ENCODE measurements at regions of chr1 and their contacts with region 1.

Region 1: GRCh38 chr1:208652296-208653160 is 408.3 kb upstream of the PLXNA2 start:
- DNase-seq: peak; percentile 83
- H3K4me3 Mint-ChIP-seq: no peak overlapping the region
- H3K27ac Mint-ChIP-seq: no peak overlapping the region
- H3K4me1 Mint-ChIP-seq: peaks cover 13% of the 10 kb centered on the region
- H3K27me3 Mint-ChIP-seq: peaks cover 21% of the 10 kb centered on the region
- CTCF ChIP-seq: peak; percentile 98

Region 2: GRCh38 chr1:208251911-208252835 is 400.4 kb before region 1 on chr1:
- CTCF ChIA-PET with region 1: no interaction called
- POLR2A ChIA-PET with region 1: no interaction called
- intact Hi-C with region 1: no loop called
- DNase-seq: no peak
- H3K4me3 Mint-ChIP-seq: no peak overlapping the region
- H3K27ac Mint-ChIP-seq: no peak overlapping the region
- H3K4me1 Mint-ChIP-seq: peaks cover 11% of the 10 kb centered on the region
- H3K27me3 Mint-ChIP-seq: peaks cover 24% of the 10 kb centered on the region
- CTCF ChIP-seq: no peak

Region 3: GRCh38 chr1:208641579-208642280 is 10.8 kb before region 1 on chr1:
- CTCF ChIA-PET with region 1: interaction called, 50 read pairs
- POLR2A ChIA-PET with region 1: no interaction called
- intact Hi-C with region 1: no loop called
- DNase-seq: no peak
- H3K4me3 Mint-ChIP-seq: no peak overlapping the region
- H3K27ac Mint-ChIP-seq: no peak overlapping the region
- H3K4me1 Mint-ChIP-seq: no peaks in the 10 kb centered on the region
- H3K27me3 Mint-ChIP-seq: peaks cover 27% of the 10 kb centered on the region
- CTCF ChIP-seq: no peak

Region 4: GRCh38 chr1:208793861-208794345 is 141.4 kb after region 1 on chr1:
- CTCF ChIA-PET with region 1: no interaction called
- POLR2A ChIA-PET with region 1: no interaction called
- intact Hi-C with region 1: no loop called
- DNase-seq: no peak
- H3K4me3 Mint-ChIP-seq: no peak overlapping the region
- H3K27ac Mint-ChIP-seq: no peak overlapping the region
- H3K4me1 Mint-ChIP-seq: peaks cover under 1% of the 10 kb centered on the region
- H3K27me3 Mint-ChIP-seq: no peaks in the 10 kb centered on the region
- CTCF ChIP-seq: no peak

Region 5: DNA sequence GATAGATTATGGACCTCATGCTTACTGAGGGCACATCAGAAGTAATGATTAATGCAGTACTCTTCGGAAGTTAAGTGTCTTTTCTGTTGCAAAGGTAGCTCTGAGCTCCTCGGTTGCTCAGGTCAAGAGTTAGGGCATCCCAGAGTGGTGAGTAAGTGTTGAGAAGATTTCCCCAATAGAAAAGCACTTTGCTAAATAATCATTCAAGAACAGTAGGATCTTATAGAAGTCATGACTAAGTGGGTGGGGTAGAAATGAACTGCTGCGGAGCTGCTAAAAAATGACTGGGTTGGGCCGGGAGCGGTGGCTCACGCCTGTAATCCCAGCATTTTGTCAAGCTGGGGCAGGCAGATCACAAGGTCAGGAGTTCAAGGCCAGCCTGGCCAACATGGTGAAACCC is 282.4 kb after region 1 on chr1:
- CTCF ChIA-PET with region 1: interaction called, 9 read pairs
- POLR2A ChIA-PET with region 1: no interaction called
- intact Hi-C with region 1: loop called (anchors 5 kb)
- DNase-seq: peak; percentile 27
- H3K4me3 Mint-ChIP-seq: no peak overlapping the region
- H3K27ac Mint-ChIP-seq: peak overlapping the region; percentile 58
- H3K4me1 Mint-ChIP-seq: peaks cover 7% of the 10 kb centered on the region
- H3K27me3 Mint-ChIP-seq: no peaks in the 10 kb centered on the region
- CTCF ChIP-seq: no peak

Region 6: DNA sequence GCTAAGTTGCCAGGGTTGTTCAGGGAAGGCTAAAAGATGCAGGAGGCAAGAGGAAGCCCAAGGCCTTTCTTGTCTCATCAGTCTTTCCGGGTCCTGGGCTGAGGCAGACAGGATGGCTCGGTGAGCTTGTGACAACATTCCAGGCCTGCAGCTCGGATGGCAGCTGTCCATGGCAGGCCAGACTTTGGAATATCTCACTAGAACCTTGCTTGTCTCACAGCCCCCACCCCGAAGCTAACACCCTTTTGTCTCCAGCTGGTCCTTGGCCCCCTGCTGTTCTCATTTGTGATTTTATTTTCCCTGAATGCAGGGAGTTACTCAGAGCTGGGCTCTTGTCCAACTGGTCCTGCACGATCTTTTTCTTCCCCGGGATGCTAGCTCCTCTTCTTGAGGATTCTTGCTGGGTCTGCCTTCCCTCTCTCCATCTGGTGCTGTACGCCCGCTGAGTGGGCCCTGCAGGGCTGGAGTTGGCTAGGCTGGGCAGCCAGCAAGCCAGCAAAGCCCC is 453.8 kb after region 1 on chr1:
- CTCF ChIA-PET with region 1: interaction called, 6 read pairs
- POLR2A ChIA-PET with region 1: no interaction called
- intact Hi-C with region 1: loop called (anchors 1 kb)
- DNase-seq: peak; percentile 75
- H3K4me3 Mint-ChIP-seq: no peak overlapping the region
- H3K27ac Mint-ChIP-seq: no peak overlapping the region
- H3K4me1 Mint-ChIP-seq: peaks cover 11% of the 10 kb centered on the region
- H3K27me3 Mint-ChIP-seq: peaks cover 19% of the 10 kb centered on the region
- CTCF ChIP-seq: peak; percentile 11

Region 7: DNA sequence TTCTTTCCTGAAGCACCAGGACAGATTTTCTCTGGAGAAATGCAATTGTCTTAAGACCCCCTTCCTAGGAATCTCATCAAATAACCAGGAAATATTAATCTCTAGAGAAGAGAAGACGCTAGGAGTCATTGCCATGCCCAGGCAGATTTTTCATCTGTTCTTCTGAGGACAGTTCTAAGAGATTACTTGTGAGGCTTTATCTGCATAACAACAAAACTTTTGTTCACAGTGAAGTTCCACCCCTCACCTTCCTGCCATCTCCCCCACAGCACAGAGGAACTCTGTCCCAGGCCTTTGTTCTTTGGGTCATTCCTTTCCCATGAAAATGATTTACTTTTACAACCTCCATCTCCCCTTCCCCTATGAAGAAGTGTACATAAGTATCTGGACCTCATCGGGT is 546.4 kb after region 1 on chr1:
- CTCF ChIA-PET with region 1: interaction called, 215 read pairs
- POLR2A ChIA-PET with region 1: interaction called, 3 read pairs
- intact Hi-C with region 1: no loop called
- DNase-seq: no peak
- H3K4me3 Mint-ChIP-seq: no peak overlapping the region
- H3K27ac Mint-ChIP-seq: no peak overlapping the region
- H3K4me1 Mint-ChIP-seq: no peaks in the 10 kb centered on the region
- H3K27me3 Mint-ChIP-seq: no peaks in the 10 kb centered on the region
- CTCF ChIP-seq: no peak

Measured in MCF 10A (cell line).